Naive thymus-derived CD4-positive, alpha-beta T cell (primary cell): ENCODE measurements at regions of chr3 and their contacts with region 1.

Region 1: DNA sequence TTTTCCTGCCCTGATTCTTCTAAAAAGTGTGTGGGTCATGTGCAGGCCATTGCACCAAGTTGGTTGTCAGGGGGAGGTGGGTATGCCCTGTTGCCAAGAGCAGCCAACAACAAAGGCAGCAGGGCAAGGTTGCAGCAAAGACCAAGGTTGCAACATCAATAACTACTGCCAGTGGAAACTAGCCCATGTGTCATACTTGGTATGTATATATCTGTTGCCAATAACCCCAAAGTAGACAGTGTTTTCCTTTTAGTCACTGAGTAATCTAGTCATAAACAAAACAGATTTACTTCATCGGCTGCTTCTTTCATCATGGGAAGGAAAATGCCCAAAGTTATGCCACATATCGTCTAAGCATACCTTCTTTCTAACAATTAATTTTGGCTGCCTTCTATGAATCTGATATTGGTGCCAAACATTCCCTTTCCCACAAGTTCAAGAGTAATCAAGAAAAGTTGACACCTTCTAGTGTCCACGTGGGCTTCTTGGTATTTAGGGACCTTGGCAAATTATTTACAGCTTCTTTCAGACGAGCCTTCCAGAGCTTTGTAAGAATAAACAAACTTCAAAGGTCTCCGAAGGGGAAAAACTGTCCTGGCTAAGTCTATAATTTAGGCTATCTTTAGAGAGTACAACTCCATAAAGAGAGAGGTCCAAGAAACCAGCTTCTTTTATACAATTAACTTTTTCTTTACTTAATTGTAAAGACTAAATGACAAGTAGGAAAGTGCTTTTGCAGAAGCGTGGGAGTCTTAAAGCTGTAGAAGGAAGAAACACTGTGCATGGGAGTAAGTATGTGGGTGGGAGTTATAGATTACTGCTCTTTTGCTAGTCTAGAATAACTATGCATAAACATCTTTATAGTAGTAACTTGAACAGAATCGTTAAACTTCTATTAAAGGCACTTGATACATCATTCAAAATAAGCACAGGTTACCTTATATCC is 10.0 kb upstream of the MBNL1 start:
- DNase-seq: peak in 6 of 9 donors; percentile 34 to 90 (median 52)
- ATAC-seq: peak; percentile 87
- H3K4me3 ChIP-seq: peak overlapping the region; percentile 3
- H3K4me3 Mint-ChIP-seq: peak overlapping the region; percentile 71 to 87 (median 81)
- H3K27ac ChIP-seq: peak overlapping the region; percentile 83
- H3K27ac Mint-ChIP-seq: peak overlapping the region; percentile 83 to 99 (median 95)
- H3K4me1 ChIP-seq: peaks cover 72 to 78% of the 10 kb centered on the region in 2 donors
- H3K4me1 Mint-ChIP-seq: peaks cover 68 to 98% (median 90%) of the 10 kb centered on the region in 7 donors
- H3K27me3 ChIP-seq: no peaks in the 10 kb centered on the region
- H3K27me3 Mint-ChIP-seq: no peaks in the 10 kb centered on the region

Region 2: DNA sequence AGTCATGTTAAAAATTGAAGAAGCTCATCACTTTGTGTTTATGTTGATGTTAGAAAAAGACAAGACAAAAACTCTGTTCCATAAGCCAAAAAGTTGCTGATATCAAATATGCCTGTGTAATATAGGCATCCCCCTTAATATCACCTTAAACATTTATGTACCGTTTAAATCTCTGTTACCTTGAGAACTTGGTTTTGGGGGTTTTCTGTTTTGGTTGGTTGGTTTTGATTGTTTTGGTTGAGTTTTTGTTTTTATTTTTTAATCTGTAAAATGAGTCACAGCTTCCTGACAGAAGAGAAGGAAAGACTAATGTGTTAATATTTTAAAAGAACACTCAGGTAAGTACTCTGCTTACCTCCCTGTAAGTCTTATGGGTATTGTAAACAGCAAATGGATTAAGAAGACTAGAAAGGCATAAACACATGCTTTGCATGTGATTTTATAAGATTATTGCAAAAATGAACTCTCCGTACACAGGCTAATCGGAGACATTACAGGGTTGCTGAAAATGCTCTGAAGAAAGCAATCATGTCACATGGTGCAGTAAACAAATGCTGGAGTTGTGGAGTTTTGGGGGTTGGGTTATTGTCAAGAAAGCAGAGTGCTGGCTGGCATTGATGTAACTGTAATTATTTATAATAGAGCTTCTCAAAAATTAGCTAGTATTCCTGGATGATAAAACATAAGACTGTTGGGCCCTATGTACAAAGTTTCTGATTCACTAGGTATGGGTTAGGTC is 59.5 kb before region 1 on chr3:
- CTCF ChIA-PET with region 1: interaction called, 8 read pairs
- POLR2A ChIA-PET with region 1: interaction called, 168 read pairs
- intact Hi-C with region 1: loop called in 1 of 2 experiments (anchors 1 kb)
- DNase-seq: peak in 2 of 9 donors; percentile 37
- ATAC-seq: peak; percentile 58
- H3K4me3 ChIP-seq: peak overlapping the region; percentile 50
- H3K4me3 Mint-ChIP-seq: peak overlapping the region; percentile 63 to 89 (median 84)
- H3K27ac ChIP-seq: peak overlapping the region; percentile 84
- H3K27ac Mint-ChIP-seq: peak overlapping the region; percentile 90 to 100 (median 94)
- H3K4me1 ChIP-seq: peaks cover 30 to 58% of the 10 kb centered on the region in 2 donors
- H3K4me1 Mint-ChIP-seq: peaks cover 43 to 84% (median 71%) of the 10 kb centered on the region in 7 donors
- H3K27me3 ChIP-seq: no peaks in the 10 kb centered on the region
- H3K27me3 Mint-ChIP-seq: no peaks in the 10 kb centered on the region

Region 3: GRCh38 chr3:152222327-152222726 is 36.4 kb before region 1 on chr3:
- CTCF ChIA-PET with region 1: interaction called, 3 read pairs
- POLR2A ChIA-PET with region 1: interaction called, 10 read pairs
- intact Hi-C with region 1: loop called in 1 of 2 experiments (anchors 2 kb)
- DNase-seq: peak in 1 of 9 donors; percentile 14
- ATAC-seq: peak; percentile 57
- H3K4me3 ChIP-seq: peak overlapping the region; percentile 3
- H3K4me3 Mint-ChIP-seq: peak overlapping the region; percentile 48 to 86 (median 74)
- H3K27ac ChIP-seq: peak overlapping the region; percentile 67
- H3K27ac Mint-ChIP-seq: peak overlapping the region; percentile 65 to 99 (median 92)
- H3K4me1 ChIP-seq: peaks cover 4 to 46% of the 10 kb centered on the region in 2 donors
- H3K4me1 Mint-ChIP-seq: peaks cover 49 to 80% (median 71%) of the 10 kb centered on the region in 7 donors
- H3K27me3 ChIP-seq: no peaks in the 10 kb centered on the region
- H3K27me3 Mint-ChIP-seq: no peaks in the 10 kb centered on the region